ENCODE measurements at regions of chr11 and their contacts with region 1.

Region 1: DNA sequence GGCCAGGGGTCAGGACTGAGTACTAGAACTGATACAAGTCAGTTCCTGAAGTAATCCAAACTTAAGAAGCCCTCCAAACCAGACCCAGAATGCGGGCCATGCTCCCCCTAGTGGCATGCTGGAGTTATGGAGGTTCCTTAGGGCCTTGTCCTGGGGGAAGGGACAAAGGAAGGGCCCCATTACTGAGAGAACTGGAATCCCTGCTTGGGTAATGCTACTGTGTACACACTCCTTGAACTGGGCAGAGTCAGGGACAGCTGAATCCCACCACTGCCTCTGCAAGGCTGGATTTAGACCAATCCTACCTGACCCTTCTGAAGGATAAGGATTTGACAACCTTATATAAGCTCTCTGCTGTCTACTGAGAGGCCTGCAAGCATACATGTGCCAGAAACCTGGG is 97.3 kb upstream of the AKIP1 start:
- DNase-seq: peak; percentile 77
- ATAC-seq: peak; percentile 64

Region 2: DNA sequence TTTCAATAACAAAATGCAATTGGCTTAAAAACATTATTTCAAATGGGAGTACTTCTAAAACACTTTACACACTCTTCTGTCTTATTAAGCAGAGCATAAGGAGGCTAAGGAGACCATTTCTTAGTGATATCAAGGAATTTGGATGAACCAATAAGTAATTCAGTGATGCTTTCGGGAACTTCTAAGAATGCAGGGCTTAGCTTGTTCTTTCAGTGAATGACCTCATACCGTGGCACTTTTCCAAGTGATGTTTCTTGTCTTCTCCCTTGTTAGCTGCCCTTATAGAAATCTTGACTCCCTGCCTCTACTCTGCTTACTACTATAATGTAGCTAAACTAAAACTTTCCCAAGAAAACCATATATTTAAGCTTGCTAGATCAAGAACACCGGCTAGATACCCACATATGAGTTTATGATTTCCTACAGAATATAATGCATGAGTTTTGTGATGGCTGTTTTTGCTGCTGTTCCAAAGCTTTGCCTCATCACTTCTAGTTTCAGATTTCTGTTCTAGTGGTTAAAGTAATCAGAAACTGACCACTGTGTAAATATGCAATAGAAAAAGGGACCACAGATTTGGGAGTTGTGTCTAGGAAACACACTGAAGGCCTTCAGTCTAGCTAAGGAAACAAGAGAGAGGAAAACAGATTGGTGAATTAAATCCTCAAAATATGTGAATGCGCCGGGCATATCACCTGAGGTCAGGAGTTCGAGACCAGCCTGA is 182.1 kb before region 1 on chr11:
- intact Hi-C with region 1: no loop called
- DNase-seq: no peak
- ATAC-seq: no peak

Region 3: GRCh38 chr11:8688414-8689362 is 125.0 kb before region 1 on chr11:
- intact Hi-C with region 1: loop called (anchors 5 kb)
- DNase-seq: peak; percentile 96
- ATAC-seq: peak; percentile 98

Region 4: GRCh38 chr11:8964324-8965320 is 151.0 kb after region 1 on chr11 and contains the start of gene TMEM9B:
- intact Hi-C with region 1: loop called (anchors 10 kb)
- DNase-seq: peak; percentile 95
- ATAC-seq: peak; percentile 97
- total RNA-seq, gene TMEM9B: 39.7 TPM

Measured in Right ventricle myocardium superior (tissue), 1 donor.